ENCODE measurements at regions of chr5 and their contacts with region 1.

Region 1: DNA sequence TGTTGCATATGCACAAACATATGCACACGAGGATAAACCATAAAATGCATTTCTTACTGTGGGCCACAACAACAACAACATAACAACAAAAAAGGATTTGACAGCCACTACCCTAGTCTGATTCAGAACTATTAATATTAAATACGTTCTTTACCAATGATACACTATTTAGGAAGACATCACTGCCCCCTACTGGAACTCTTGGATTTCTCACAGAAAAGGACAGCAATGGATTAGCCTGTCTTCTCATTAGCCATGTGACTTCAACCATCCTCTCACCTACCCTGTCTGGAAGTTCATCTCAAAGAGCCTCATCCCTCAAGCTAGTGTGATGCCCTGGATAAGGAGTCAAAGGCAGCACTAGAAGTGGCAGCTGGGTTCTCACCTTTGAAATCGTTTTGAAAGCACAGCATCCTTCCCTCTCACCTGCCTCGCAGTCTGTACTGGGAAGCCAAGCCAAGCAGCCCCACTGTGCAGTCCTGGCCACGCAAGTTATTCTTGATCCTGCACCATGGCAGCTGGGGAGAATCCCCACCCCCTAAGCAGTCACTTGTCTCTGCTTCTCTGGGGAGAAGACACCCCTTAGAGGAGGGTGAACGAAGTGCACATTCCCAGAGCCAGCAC is 64.6 kb downstream of the SH3TC2 start:
- DNase-seq: peak in 1 of 5 donors; percentile 28
- ATAC-seq: peak in 3 of 4 donors; percentile 47 to 69 (median 69)
- H3K4me3 ChIP-seq: no peak overlapping the region
- H3K27ac ChIP-seq: no peak overlapping the region
- H3K4me1 ChIP-seq: peaks cover 0 to 28% (median 6%) of the 10 kb centered on the region in 12 donors
- H3K27me3 ChIP-seq: no peaks in the 10 kb centered on the region
- CTCF ChIP-seq: peak; percentile 57 to 77 (median 68)
- POLR2A ChIP-seq: no peak

Region 2: DNA sequence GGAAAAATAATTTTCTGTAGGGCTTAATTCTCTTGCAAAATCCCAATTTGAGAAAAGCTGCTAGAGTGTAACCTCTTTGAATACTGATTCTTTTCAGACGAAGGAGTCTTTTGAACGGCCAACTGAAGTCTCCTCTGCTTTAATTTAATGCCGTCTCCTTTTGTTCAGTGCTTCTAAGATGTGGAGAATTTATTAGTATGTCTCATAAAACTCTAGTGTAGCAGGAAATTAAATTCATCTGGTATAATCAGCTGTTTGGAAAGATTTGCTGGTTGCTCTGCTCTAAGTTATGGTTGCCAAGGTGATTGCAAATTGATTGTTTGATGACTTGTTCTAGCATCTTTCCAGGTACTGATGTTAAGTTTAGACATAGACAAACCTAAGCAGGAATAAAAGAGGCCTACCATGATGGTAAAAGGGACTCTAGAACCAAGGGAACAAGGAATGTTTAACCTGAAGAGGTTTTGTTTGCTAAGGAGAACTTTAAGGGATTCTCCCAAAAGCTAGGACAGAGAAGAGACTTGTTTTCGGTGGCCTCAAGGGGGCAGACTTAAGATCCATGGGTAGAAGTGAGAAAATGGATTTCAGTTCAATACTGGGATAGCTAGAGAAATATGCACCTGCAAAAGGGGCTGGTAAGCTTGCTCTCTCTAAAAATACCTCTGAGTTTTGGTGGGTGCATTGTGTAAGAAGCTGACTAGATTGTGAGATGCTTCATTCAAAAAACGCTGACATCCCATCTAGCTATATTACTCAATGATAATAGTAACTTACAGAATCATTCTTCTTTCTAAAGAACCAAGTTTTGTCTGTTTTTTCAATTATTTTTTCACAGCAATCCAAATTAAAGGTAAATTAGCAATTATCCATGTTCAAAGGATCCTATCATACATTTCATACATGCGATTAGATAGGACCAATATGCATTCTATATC is 177.6 kb before region 1 on chr5:
- intact Hi-C with region 1: loop called in 1 of 10 experiments (anchors 5 kb)
- DNase-seq: no peak
- ATAC-seq: no peak
- H3K4me3 ChIP-seq: no peak overlapping the region
- H3K27ac ChIP-seq: no peak overlapping the region
- H3K4me1 ChIP-seq: peaks cover 0 to 47% (median 6%) of the 10 kb centered on the region in 12 donors
- H3K27me3 ChIP-seq: no peaks in the 10 kb centered on the region
- CTCF ChIP-seq: peak; percentile 38 to 70 (median 58)
- POLR2A ChIP-seq: no peak

Region 3: GRCh38 chr5:148912714-148913398 is 85.4 kb before region 1 on chr5:
- intact Hi-C with region 1: loop called in 1 of 10 experiments (anchors 5 kb)
- DNase-seq: no peak
- ATAC-seq: peak in 2 of 4 donors; percentile 27 to 37
- H3K4me3 ChIP-seq: no peak overlapping the region
- H3K27ac ChIP-seq: peak overlapping the region in 1 of 12 donors; percentile 33
- H3K4me1 ChIP-seq: peaks cover 0 to 25% (median 11%) of the 10 kb centered on the region in 12 donors
- H3K27me3 ChIP-seq: no peaks in the 10 kb centered on the region
- CTCF ChIP-seq: peak in 7 of 12 donors; percentile 10 to 25 (median 15)
- POLR2A ChIP-seq: no peak

Region 4: DNA sequence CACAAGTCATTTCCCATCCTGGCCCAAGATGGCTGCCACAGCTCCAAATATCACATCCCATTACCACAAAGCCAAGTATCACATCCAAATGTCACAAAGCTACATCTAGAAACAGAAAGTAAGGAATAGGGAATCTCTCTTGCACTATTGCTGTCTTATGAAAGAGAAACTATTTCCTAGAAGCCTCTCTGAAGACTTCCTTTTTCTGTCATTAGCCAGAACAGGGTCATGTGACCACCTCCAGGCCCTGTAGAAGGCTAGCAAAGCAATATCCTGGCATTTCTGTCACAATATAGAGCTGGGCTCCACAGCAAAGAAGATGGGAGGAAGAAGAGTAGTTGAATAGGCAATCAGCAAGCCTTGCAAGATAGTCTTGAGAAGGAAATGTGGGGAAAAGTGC is 34.6 kb before region 1 on chr5:
- intact Hi-C with region 1: loop called in 1 of 10 experiments (anchors 5 kb)
- DNase-seq: no peak
- ATAC-seq: peak in 1 of 4 donors; percentile 33
- H3K4me3 ChIP-seq: no peak overlapping the region
- H3K27ac ChIP-seq: peak overlapping the region in 2 of 12 donors; percentile 22 to 76
- H3K4me1 ChIP-seq: peaks cover 0 to 43% (median 11%) of the 10 kb centered on the region in 12 donors
- H3K27me3 ChIP-seq: no peaks in the 10 kb centered on the region
- CTCF ChIP-seq: no peak
- POLR2A ChIP-seq: no peak

Measured in heart left ventricle (tissue), 16 donors.